Activated T-helper 1 cell treated with anti-CD3 and anti-CD28 coated beads, Interleukin-12 subunit alpha, Interleukin-12 subunit beta, Interleukin-2, Interleukin-4 antibody, amounts not matched to agents 30 ng/mL and 10 ng/mL and 1 ng/mL, durations not matched to agents 14 hours and 24 hours and 36 hours (primary cell): ENCODE measurements at regions of chr3 and their contacts with region 1.

Region 1: GRCh38 chr3:56915966-56916586 is 114.3 kb upstream of the ARHGEF3 start:
- DNase-seq: peak; percentile 71
- H3K4me3 Mint-ChIP-seq: peak overlapping the region; percentile 89
- H3K27ac Mint-ChIP-seq: peak overlapping the region; percentile 88
- H3K4me1 Mint-ChIP-seq: peaks cover 68% of the 10 kb centered on the region
- H3K27me3 Mint-ChIP-seq: no peaks in the 10 kb centered on the region

Region 2: GRCh38 chr3:56556908-56557830 is 358.9 kb before region 1 on chr3 and contains the start of gene CCDC66:
- intact Hi-C with region 1: loop called (anchors 5 kb)
- DNase-seq: peak; percentile 90
- H3K4me3 Mint-ChIP-seq: peak within 1 kb of the TSS; percentile 97
- H3K27ac Mint-ChIP-seq: peak within 1 kb of the TSS; percentile 99
- H3K4me1 Mint-ChIP-seq: peaks cover 38% of the 10 kb centered on the region
- H3K27me3 Mint-ChIP-seq: peaks cover 23% of the 10 kb centered on the region
- total RNA-seq, gene CCDC66: 37.7 and 40.4 TPM in 2 replicates

Region 3: GRCh38 chr3:56702490-56703315 is 213.4 kb before region 1 on chr3:
- intact Hi-C with region 1: loop called (anchors 5 kb)
- DNase-seq: no peak
- H3K4me3 Mint-ChIP-seq: no peak overlapping the region
- H3K27ac Mint-ChIP-seq: no peak overlapping the region
- H3K4me1 Mint-ChIP-seq: peaks cover 29% of the 10 kb centered on the region
- H3K27me3 Mint-ChIP-seq: no peaks in the 10 kb centered on the region

Region 4: GRCh38 chr3:56758539-56758981 is 157.5 kb before region 1 on chr3:
- intact Hi-C with region 1: loop called (anchors 1 kb)
- DNase-seq: peak; percentile 9
- H3K4me3 Mint-ChIP-seq: peak overlapping the region; percentile 53
- H3K27ac Mint-ChIP-seq: peak overlapping the region; percentile 79
- H3K4me1 Mint-ChIP-seq: peaks cover 81% of the 10 kb centered on the region
- H3K27me3 Mint-ChIP-seq: no peaks in the 10 kb centered on the region

Region 5: DNA sequence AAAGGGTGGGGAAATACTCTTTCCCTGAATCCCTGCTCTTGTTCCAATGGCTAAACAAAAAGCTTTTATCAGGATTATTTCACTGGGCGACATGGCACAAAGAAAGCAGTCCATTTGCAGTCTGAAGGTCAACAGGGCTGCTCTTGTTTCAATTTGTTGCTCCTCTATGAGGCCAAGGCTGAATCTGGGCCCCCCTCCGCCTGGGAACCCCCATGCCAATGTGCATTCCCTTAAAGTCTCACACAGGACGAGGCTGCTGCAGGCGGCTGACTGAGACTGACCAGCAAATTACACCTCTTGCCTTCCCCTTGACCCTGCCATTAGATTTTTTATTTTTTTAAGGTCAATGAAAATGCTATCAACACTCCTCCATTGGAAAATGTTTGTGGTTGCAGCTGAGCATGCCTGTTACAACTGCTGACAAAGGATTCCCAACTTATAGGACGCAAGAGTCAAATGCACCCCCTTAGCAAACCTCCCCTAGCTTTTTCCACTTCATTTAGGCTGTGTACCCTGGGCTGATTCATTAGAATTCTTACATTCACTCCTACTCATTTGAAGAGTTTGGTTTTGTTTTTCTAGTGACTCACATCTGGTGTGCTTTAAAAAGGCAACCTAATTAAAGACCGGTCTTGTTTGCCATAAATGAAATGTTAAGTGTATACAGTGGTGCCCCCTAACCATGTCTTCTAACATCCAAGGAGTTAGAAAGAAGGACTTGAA is 53.6 kb before region 1 on chr3:
- intact Hi-C with region 1: loop called (anchors 1 kb)
- DNase-seq: no peak
- H3K4me3 Mint-ChIP-seq: peak overlapping the region; percentile 38
- H3K27ac Mint-ChIP-seq: peak overlapping the region; percentile 90
- H3K4me1 Mint-ChIP-seq: peaks cover 75% of the 10 kb centered on the region
- H3K27me3 Mint-ChIP-seq: no peaks in the 10 kb centered on the region

Region 6: GRCh38 chr3:56894881-56895431 is 21.1 kb before region 1 on chr3:
- intact Hi-C with region 1: loop called (anchors 1 kb)
- DNase-seq: no peak
- H3K4me3 Mint-ChIP-seq: no peak overlapping the region
- H3K27ac Mint-ChIP-seq: no peak overlapping the region
- H3K4me1 Mint-ChIP-seq: peaks cover 46% of the 10 kb centered on the region
- H3K27me3 Mint-ChIP-seq: peaks cover 9% of the 10 kb centered on the region

Region 7: DNA sequence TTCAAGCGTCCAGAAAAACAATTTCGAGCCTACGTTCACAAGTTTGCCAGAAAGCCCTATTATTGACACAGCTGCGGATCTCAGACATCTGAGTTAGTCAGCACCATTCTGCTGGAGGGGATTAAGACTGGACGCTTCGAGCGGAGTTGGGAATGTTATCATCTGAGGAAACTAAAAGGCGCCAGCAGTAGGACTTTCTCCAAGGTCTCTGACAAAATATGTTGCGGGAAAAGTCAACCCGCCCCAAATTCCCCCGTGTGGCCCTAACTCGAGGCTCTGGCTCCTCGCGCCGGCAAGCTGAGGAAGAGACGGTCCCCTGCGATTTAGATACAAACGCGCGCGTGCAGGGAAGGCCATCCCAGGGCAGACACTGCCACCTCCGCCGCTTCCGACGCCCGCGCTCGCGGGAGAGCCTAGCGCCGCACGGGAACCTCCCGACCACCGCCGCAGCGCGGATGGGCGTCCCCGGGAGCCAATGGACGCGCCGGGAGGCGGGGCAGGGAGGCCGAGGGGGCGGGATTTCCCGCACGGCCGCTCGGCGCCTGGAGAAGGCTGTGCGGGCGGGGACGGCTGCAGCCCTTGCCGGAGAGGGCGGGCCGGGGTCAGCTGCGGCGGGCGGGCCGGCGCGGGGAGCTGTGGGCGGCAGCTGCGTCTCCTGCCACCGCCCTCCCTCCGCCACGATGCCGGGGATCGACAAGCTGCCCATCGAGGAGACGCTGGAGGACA is 311.3 kb after region 1 on chr3 and contains the start of gene APPL1:
- intact Hi-C with region 1: loop called (anchors 5 kb)
- DNase-seq: peak; percentile 92
- H3K4me3 Mint-ChIP-seq: peak within 1 kb of the TSS; percentile 93
- H3K27ac Mint-ChIP-seq: peak within 1 kb of the TSS; percentile 82
- H3K4me1 Mint-ChIP-seq: peaks cover 42% of the 10 kb centered on the region
- H3K27me3 Mint-ChIP-seq: peaks cover 8% of the 10 kb centered on the region
- total RNA-seq, gene APPL1: 39.9 and 46.0 TPM in 2 replicates